Vagina (tissue), 2 donors: ENCODE measurements at regions of chr11 and their contacts with region 1.

Region 1: DNA sequence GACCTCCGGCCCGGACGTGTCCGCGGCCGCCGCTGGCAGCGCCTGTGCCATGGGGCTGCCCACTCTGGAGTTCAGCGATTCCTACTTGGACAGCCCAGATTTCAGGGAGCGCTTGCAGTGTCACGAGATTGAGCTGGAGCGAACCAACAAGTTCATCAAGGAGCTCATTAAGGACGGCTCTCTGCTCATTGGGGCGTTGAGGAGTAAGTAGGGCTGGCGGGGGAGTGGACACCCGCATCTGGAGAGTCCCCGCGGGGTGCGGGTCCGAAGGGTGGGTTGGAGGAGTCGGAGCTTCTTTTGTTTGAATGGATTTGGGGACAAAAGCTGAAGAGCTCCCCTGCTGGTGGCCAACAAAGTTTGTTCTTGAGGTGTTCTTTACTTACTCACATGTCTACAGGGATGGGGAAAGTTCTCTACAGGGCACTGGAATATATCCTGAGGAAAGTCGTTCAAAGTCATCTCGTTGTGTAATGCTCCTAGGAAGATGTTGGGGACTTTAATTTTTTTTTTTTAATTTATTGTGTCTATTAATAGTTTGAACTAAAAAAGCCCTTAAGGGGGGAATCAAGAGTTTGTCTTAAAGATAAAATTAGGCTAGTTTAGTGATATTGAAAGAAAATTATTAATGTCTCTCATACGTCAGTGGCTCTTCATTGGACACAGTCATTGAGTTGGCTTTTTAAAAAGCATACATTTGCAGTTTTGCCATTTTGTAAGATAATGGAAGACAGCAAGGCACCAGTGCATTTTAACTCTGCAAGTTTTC is 725 bp downstream of the ARHGAP42 start:
- DNase-seq: peak in 1 of 2 donors; percentile 86
- H3K4me3 ChIP-seq: peak overlapping the region; percentile 68 to 75
- H3K27ac ChIP-seq: peak overlapping the region; percentile 76
- H3K4me1 ChIP-seq: peaks cover 42% of the 10 kb centered on the region
- H3K27me3 ChIP-seq: no peaks in the 10 kb centered on the region
- CTCF ChIP-seq: peak; percentile 16 to 54 (median 35)
- POLR2A ChIP-seq: no peak

Region 2: GRCh38 chr11:100575870-100576705 is 111.7 kb before region 1 on chr11:
- intact Hi-C with region 1: loop called (anchors 5 kb)
- DNase-seq: no peak
- H3K4me3 ChIP-seq: no peak overlapping the region
- H3K27ac ChIP-seq: no peak overlapping the region
- H3K4me1 ChIP-seq: no peaks in the 10 kb centered on the region
- H3K27me3 ChIP-seq: no peaks in the 10 kb centered on the region
- CTCF ChIP-seq: peak; percentile 53 to 77 (median 70)
- POLR2A ChIP-seq: no peak

Region 3: GRCh38 chr11:100739666-100740065 is 51.9 kb after region 1 on chr11:
- intact Hi-C with region 1: no loop called
- DNase-seq: no peak
- H3K4me3 ChIP-seq: no peak overlapping the region
- H3K27ac ChIP-seq: no peak overlapping the region
- H3K4me1 ChIP-seq: peaks cover 36% of the 10 kb centered on the region
- H3K27me3 ChIP-seq: no peaks in the 10 kb centered on the region
- CTCF ChIP-seq: no peak
- POLR2A ChIP-seq: no peak

Region 4: GRCh38 chr11:100855466-100856067 is 167.8 kb after region 1 on chr11:
- intact Hi-C with region 1: loop called (anchors 10 kb)
- DNase-seq: no peak
- H3K4me3 ChIP-seq: no peak overlapping the region
- H3K27ac ChIP-seq: no peak overlapping the region
- H3K4me1 ChIP-seq: no peaks in the 10 kb centered on the region
- H3K27me3 ChIP-seq: no peaks in the 10 kb centered on the region
- CTCF ChIP-seq: peak; percentile 50 to 55 (median 52)
- POLR2A ChIP-seq: no peak

Region 5: GRCh38 chr11:101127699-101128570 is 440.1 kb after region 1 on chr11:
- intact Hi-C with region 1: loop called (anchors 10 kb)
- DNase-seq: no peak
- H3K4me3 ChIP-seq: peak overlapping the region; percentile 58 to 78
- H3K27ac ChIP-seq: peak overlapping the region; percentile 93
- H3K4me1 ChIP-seq: no peaks in the 10 kb centered on the region
- H3K27me3 ChIP-seq: no peaks in the 10 kb centered on the region
- CTCF ChIP-seq: no peak
- POLR2A ChIP-seq: no peak